Endothelial cell of umbilical vein (primary cell): ENCODE measurements at regions of chr14 and their contacts with region 1.

Region 1: DNA sequence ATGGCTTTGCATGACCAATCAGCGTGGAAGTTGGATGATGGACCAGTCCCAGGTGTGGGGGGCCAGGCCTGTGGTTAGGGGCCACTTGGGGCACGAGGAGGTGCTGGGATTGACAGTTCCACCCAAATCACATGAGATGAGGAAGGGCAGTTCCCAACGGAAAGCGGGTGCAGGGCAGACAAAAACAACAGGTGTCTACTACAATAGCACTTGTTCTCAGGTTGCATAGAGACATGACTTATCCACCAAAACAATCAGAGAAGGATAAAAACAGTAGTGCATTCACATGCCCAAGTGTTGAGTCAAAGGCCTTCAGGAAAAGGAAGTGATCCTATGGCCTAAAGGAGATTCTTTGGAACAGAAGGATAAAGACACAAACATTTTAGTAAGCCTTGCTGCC is 14.6 kb upstream of the EIF2B2 start:
- DNase-seq: peak; percentile 97
- H3K4me3 ChIP-seq: no peak overlapping the region
- H3K27ac ChIP-seq: peak overlapping the region; percentile 99
- H3K4me1 ChIP-seq: peaks cover 39% of the 10 kb centered on the region
- H3K27me3 ChIP-seq: no peaks in the 10 kb centered on the region
- CTCF ChIP-seq: no peak
- POLR2A ChIP-seq: no peak

Region 2: GRCh38 chr14:74963705-74964271 is 24.3 kb before region 1 on chr14:
- CTCF ChIA-PET with region 1: interaction called, 3 read pairs
- POLR2A ChIA-PET with region 1: no interaction called
- dilution Hi-C with region 1: no loop called
- intact Hi-C with region 1: loop called (anchors 1 kb)
- DNase-seq: no peak
- H3K4me3 ChIP-seq: no peak overlapping the region
- H3K27ac ChIP-seq: peak overlapping the region; percentile 4
- H3K4me1 ChIP-seq: peaks cover 29% of the 10 kb centered on the region
- H3K27me3 ChIP-seq: no peaks in the 10 kb centered on the region
- CTCF ChIP-seq: no peak
- POLR2A ChIP-seq: no peak

Region 3: GRCh38 chr14:74973003-74973653 is 15.0 kb before region 1 on chr14:
- CTCF ChIA-PET with region 1: interaction called, 3 read pairs
- POLR2A ChIA-PET with region 1: no interaction called
- dilution Hi-C with region 1: no loop called
- intact Hi-C with region 1: loop called (anchors 1 kb)
- DNase-seq: peak; percentile 84
- H3K4me3 ChIP-seq: no peak overlapping the region
- H3K27ac ChIP-seq: peak overlapping the region; percentile 62
- H3K4me1 ChIP-seq: peaks cover 23% of the 10 kb centered on the region
- H3K27me3 ChIP-seq: no peaks in the 10 kb centered on the region
- CTCF ChIP-seq: no peak
- POLR2A ChIP-seq: peak; percentile 17

Region 4: GRCh38 chr14:75063407-75064213 is 75.5 kb after region 1 on chr14 and contains the start of gene ACYP1:
- CTCF ChIA-PET with region 1: no interaction called
- POLR2A ChIA-PET with region 1: no interaction called
- dilution Hi-C with region 1: no loop called
- intact Hi-C with region 1: loop called (anchors 1 kb)
- DNase-seq: peak; percentile 93
- H3K4me3 ChIP-seq: peak within 1 kb of the TSS; percentile 63 to 79 (median 75)
- H3K27ac ChIP-seq: peak within 1 kb of the TSS; percentile 54
- H3K4me1 ChIP-seq: peaks cover 32% of the 10 kb centered on the region
- H3K27me3 ChIP-seq: no peaks in the 10 kb centered on the region
- CTCF ChIP-seq: no peak
- POLR2A ChIP-seq: peak; percentile 39
- total RNA-seq, gene ACYP1: 34.2 and 37.5 TPM in 2 replicates